CD4-positive, alpha-beta T cell (primary cell): ENCODE measurements at regions of chr3 and their contacts with region 1.

Region 1: GRCh38 chr3:39383045-39383880 is at the start of gene SLC25A38:
- DNase-seq: peak; percentile 58 to 94 (median 75)
- ATAC-seq: peak; percentile 82
- H3K4me3 ChIP-seq: peak within 1 kb of the TSS; percentile 95
- H3K4me3 Mint-ChIP-seq: peak within 1 kb of the TSS; percentile 94
- H3K27ac ChIP-seq: peak within 1 kb of the TSS; percentile 93 to 97
- H3K27ac Mint-ChIP-seq: peak within 1 kb of the TSS; percentile 97
- H3K4me1 ChIP-seq: peaks cover 53% of the 10 kb centered on the region
- H3K4me1 Mint-ChIP-seq: peaks cover 55% of the 10 kb centered on the region
- H3K27me3 ChIP-seq: no peaks in the 10 kb centered on the region
- H3K27me3 Mint-ChIP-seq: no peaks in the 10 kb centered on the region
- CTCF ChIP-seq: peak; percentile 59
- total RNA-seq, gene SLC25A38: 43.2 to 44.7 TPM

Region 2: DNA sequence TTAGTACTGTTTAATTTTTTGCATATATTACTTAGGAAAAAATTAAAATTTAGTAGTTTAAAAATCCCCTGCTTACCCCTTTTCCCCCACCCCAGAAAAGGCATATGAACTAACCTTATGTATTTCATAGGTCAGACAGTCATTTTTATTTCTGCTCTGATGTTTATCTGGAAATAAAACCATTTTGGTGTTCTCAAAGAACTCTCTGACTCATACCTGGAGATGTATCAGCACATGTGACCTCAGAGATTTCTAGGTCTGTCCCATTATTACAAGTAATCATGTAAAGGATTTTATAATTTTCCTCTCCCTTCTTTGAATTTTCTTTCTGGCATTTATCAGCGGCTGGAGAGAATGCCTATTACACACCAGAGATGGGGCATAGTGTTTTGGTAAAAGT is 67.8 kb before region 1 on chr3:
- CTCF ChIA-PET with region 1: no interaction called
- POLR2A ChIA-PET with region 1: no interaction called
- intact Hi-C with region 1: no loop called
- DNase-seq: no peak
- ATAC-seq: no peak
- H3K4me3 ChIP-seq: no peak overlapping the region
- H3K4me3 Mint-ChIP-seq: no peak overlapping the region
- H3K27ac ChIP-seq: no peak overlapping the region
- H3K27ac Mint-ChIP-seq: no peak overlapping the region
- H3K4me1 ChIP-seq: no peaks in the 10 kb centered on the region
- H3K4me1 Mint-ChIP-seq: no peaks in the 10 kb centered on the region
- H3K27me3 ChIP-seq: no peaks in the 10 kb centered on the region
- H3K27me3 Mint-ChIP-seq: no peaks in the 10 kb centered on the region
- CTCF ChIP-seq: no peak

Region 3: DNA sequence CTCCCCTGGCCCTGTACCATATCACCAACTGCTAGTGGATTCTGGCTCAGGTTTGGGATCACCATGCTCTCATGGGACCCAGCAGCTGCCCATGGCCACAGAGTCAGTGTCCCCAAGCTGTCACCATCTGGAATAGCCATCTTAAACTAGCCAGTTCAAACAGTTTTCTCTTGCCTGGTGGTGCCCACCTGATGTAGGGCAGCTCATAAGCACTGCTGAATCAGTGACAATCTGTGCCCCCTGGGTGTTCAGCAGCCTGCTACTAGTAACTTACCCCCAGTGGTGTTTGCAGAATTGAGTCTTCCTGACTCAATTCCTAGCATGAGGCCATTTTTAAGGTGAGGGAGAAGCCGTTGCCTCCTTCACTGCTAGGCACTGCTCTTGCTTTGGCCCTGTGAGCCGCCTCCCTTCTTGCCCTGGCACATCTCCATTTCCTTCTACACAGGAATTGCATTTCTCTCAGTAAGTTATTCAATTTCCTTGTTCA is 31.2 kb after region 1 on chr3:
- CTCF ChIA-PET with region 1: interaction called, 3 read pairs
- POLR2A ChIA-PET with region 1: interaction called, 4 read pairs
- intact Hi-C with region 1: loop called (anchors 1 to 5 kb)
- DNase-seq: no peak
- ATAC-seq: peak; percentile 32
- H3K4me3 ChIP-seq: no peak overlapping the region
- H3K4me3 Mint-ChIP-seq: no peak overlapping the region
- H3K27ac ChIP-seq: peak overlapping the region; percentile 3 to 9
- H3K27ac Mint-ChIP-seq: peak overlapping the region; percentile 19
- H3K4me1 ChIP-seq: peaks cover 11% of the 10 kb centered on the region
- H3K4me1 Mint-ChIP-seq: peaks cover 24% of the 10 kb centered on the region
- H3K27me3 ChIP-seq: no peaks in the 10 kb centered on the region
- H3K27me3 Mint-ChIP-seq: peaks cover 4% of the 10 kb centered on the region
- CTCF ChIP-seq: no peak